ENCODE measurements at regions of chr2 and their contacts with region 1.

Region 1: GRCh38 chr2:240704651-240705050 is 13.0 kb downstream of the AQP12A start:
- DNase-seq: no peak
- CTCF ChIP-seq: no peak

Region 2: DNA sequence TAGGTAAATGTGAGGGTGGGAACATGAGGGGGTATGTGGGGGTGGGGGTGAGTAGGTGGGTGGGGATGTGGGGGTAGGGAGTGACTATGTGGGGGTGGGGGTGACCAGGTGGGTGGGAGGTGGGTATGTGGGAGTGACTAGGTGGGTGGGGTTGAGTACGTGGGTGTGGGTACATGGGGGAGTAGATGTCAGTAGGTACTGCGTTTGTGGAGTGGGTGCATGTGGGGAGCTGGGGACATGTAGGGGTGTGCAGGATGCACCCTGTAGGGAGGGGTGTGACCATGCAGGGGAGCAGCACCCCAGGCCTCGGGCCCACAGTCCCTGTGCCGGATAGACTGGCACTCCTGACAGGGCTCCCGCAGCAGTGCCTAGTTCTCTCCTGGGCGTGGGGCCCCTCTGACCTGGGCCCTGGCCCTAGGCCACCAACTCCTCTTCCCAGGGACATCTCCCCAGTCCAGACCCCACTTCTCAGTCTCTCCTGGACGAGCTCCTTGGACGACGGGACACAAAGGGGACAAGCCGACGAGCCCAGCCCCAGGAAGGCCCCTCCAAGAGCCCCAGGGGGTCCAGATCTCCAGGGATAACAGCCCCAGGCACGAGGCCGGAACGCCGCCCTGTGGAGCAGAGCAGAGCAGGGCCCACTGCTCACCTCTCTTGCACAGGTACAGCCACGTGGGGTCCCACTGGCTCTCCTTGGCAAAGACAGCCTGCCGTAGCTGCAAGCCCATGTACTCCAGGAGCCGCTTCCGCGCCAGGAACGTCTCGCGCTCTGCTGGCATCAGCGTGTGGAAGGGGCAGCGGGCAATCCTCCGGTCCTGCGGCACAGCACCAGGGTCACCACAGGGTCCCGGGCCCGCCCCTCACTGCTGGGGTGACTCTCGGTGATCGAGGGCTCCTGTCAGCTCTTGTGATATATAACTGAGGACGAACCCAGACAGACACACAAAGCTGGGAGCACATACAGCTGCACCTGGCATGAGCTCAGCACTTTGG is 205.0 kb before region 1 on chr2:
- in situ Hi-C with region 1: loop called (anchors 10 kb)
- DNase-seq: no peak
- CTCF ChIP-seq: no peak

Region 3: GRCh38 chr2:240604291-240604938 is 100.2 kb before region 1 on chr2:
- in situ Hi-C with region 1: no loop called
- DNase-seq: peak; percentile 67
- CTCF ChIP-seq: peak; percentile 40

Region 4: DNA sequence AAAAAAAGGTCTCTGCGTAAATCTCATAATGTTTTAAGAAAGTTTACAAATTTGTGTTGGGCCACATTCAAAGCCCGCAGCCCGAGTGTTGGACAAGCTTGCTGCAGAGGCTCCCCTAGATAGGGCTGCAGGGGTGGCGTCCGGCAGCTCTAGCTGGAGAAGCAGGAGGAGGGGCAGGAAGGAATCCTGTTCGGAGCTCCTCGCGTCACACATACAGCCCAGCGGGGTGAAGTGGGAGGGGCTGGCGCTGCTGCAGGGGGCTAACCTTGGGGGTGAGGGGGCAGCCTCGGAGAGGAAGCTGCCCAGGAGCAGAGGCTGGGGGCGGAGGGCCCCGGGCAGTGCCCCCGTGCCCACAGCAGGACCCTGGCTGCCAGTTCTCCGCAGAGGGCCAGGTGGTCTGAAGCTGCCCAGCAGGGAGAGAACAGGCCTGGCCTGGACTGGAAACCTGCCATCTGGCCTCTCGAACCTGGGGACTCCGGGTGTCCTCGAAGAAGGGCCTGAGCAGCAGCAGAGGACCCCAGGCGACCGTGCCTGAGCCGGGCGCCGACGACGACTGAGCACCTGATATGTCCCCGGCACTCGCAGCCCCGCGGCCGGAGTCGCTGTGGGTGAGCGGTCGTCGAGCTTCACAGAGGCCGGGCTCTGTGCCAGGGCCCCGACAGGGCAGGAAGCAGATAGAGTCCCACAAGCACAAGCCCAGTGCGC is 82.0 kb before region 1 on chr2:
- in situ Hi-C with region 1: no loop called
- DNase-seq: no peak
- CTCF ChIP-seq: no peak

Measured in GM13977 (cell line).